AG04449 (cell line): ENCODE measurements at regions of chr13 and their contacts with region 1.

Region 1: GRCh38 chr13:97855570-97856303 is 97.7 kb upstream of the IPO5 start:
- DNase-seq: peak; percentile 45
- H3K4me3 ChIP-seq: no peak overlapping the region
- CTCF ChIP-seq: peak; percentile 72

Region 2: GRCh38 chr13:97873398-97873797 is 17.7 kb after region 1 on chr13:
- CTCF ChIA-PET with region 1: interaction called, 19 read pairs
- POLR2A ChIA-PET with region 1: no interaction called
- DNase-seq: no peak
- H3K4me3 ChIP-seq: no peak overlapping the region
- CTCF ChIP-seq: no peak

Region 3: GRCh38 chr13:97879646-97880310 is 24.0 kb after region 1 on chr13:
- CTCF ChIA-PET with region 1: interaction called, 19 read pairs
- POLR2A ChIA-PET with region 1: no interaction called
- DNase-seq: peak; percentile 76
- H3K4me3 ChIP-seq: no peak overlapping the region
- CTCF ChIP-seq: no peak

Region 4: GRCh38 chr13:97911311-97912128 is 55.8 kb after region 1 on chr13:
- CTCF ChIA-PET with region 1: interaction called, 34 read pairs
- POLR2A ChIA-PET with region 1: interaction called, 3 read pairs
- DNase-seq: no peak
- H3K4me3 ChIP-seq: no peak overlapping the region
- CTCF ChIP-seq: peak; percentile 29

Region 5: DNA sequence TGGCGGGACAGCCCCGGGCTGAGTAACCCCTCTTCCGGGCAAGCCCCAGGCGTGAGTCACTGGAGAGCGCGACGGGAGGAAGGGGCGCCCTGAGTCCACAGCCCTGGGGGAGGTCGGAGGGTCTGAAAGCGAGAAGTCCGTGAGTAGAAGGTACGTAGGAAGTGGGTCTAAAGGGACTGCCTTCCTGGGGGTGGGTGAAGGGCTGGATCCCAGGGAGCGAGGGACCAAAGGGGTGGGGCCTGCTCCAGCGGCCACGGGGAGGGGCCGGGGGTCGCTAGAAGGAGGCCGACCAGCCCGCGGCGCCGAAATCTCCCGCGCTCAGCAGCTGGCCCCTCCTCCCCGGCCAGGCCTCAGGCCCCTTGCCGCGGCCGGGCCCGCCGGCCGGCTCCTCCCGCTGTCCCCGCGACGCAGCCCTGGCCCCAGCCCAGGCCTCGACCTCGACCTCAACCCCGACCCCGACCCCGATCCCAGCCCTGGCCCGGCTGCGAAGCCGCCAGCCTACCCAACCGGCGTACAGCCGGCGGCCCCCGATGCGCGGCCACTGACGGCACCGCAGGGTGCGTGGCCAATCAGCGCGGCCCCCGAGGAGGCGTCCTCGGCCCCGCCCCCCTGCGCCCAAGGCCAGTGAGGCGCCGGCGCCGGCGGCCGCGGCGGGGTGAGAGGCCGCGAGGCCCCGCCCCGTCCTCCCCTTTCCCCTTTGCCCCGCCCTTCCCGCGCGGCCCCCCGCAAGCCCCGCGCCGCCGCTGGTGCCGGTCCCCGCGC is 120.3 kb after region 1 on chr13:
- CTCF ChIA-PET with region 1: interaction called, 32 read pairs
- POLR2A ChIA-PET with region 1: no interaction called
- DNase-seq: no peak
- H3K4me3 ChIP-seq: peak overlapping the region; percentile 86
- CTCF ChIP-seq: no peak

Region 6: DNA sequence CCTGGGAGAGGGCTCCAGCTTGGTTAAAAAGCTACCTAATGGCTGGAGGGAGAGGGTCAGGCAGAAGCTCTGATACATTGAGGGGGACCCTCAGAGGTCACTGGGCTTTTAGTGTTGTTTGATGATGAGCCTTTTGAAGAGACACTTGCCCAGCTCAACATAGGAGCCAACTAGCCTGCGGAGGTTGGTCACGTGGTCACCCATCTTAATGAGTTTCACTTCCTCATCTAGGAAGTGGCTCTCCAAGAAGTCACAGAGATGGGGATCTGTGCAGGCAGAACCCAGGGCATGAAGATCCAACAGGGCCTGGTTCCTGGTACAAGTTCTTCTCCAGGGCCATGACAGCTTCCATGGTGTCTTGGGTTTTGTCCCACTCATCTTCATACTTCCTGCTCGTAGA is 131.1 kb after region 1 on chr13:
- CTCF ChIA-PET with region 1: interaction called, 14 read pairs
- POLR2A ChIA-PET with region 1: no interaction called
- DNase-seq: no peak
- H3K4me3 ChIP-seq: no peak overlapping the region
- CTCF ChIP-seq: no peak

Region 7: GRCh38 chr13:98026457-98026857 is 170.7 kb after region 1 on chr13:
- CTCF ChIA-PET with region 1: interaction called, 10 read pairs
- POLR2A ChIA-PET with region 1: no interaction called
- DNase-seq: no peak
- H3K4me3 ChIP-seq: no peak overlapping the region
- CTCF ChIP-seq: no peak